ENCODE measurements at regions of chr10 and their contacts with region 1.

Region 1: GRCh38 chr10:112811740-112812551 is 138.1 kb upstream of the TCF7L2 start:
- DNase-seq: peak; percentile 80
- H3K4me3 ChIP-seq: peak overlapping the region; percentile 54
- H3K27ac ChIP-seq: peak overlapping the region; percentile 81
- H3K27me3 ChIP-seq: no peaks in the 10 kb centered on the region
- CTCF ChIP-seq: no peak

Region 2: DNA sequence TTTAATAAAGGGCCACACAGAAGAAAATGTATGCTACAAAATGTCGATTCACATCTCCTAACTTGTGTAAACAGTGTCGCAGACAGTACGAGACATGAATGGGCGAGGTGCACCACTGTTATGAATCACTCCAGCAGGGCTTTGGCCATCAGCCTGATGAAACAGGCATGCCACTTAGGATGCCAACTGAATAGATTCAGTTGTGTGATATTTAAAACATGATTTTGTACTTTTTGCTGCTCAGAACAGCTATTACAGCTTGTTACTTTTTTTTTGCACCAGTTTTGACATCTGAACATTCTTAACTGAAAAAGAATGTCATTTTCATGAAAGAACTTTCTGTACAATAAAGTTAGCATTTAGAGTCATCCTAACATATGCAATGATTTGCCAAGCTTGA is 226.8 kb before region 1 on chr10:
- CTCF ChIA-PET with region 1: no interaction called
- POLR2A ChIA-PET with region 1: no interaction called
- DNase-seq: no peak
- H3K4me3 ChIP-seq: no peak overlapping the region
- H3K27ac ChIP-seq: no peak overlapping the region
- H3K27me3 ChIP-seq: no peaks in the 10 kb centered on the region
- CTCF ChIP-seq: no peak

Region 3: DNA sequence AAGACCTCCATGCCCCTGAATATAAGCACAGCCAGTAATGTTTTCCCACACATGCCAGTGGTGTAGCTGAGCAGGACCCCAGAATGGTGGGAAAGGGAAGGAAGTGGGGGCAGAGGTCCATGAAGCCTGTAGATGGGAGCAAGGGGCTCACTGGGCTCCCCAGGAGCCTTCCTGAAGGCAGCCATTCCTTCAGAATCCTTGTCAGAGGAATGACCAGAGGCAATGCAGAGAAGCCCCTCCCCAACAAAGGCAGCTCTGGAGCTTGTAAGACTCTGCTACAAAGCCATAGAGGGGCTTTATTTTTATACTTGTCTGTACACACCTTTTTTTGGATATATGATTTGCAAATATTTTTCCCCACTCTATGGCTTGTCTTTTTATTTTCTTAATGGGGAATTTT is 26.9 kb before region 1 on chr10:
- CTCF ChIA-PET with region 1: no interaction called
- POLR2A ChIA-PET with region 1: no interaction called
- DNase-seq: no peak
- H3K4me3 ChIP-seq: no peak overlapping the region
- H3K27ac ChIP-seq: no peak overlapping the region
- H3K27me3 ChIP-seq: no peaks in the 10 kb centered on the region
- CTCF ChIP-seq: no peak

Region 4: GRCh38 chr10:112949875-112950507 is 138.0 kb after region 1 on chr10 and contains the start of gene TCF7L2:
- CTCF ChIA-PET with region 1: no interaction called
- POLR2A ChIA-PET with region 1: interaction called, 11 read pairs
- DNase-seq: peak; percentile 89
- H3K4me3 ChIP-seq: peak within 1 kb of the TSS; percentile 60
- H3K27ac ChIP-seq: peak within 1 kb of the TSS; percentile 77
- H3K27me3 ChIP-seq: no peaks in the 10 kb centered on the region
- CTCF ChIP-seq: no peak
- polyA plus RNA-seq, gene TCF7L2: 6.3 and 7.7 TPM in 2 replicates

Region 5: DNA sequence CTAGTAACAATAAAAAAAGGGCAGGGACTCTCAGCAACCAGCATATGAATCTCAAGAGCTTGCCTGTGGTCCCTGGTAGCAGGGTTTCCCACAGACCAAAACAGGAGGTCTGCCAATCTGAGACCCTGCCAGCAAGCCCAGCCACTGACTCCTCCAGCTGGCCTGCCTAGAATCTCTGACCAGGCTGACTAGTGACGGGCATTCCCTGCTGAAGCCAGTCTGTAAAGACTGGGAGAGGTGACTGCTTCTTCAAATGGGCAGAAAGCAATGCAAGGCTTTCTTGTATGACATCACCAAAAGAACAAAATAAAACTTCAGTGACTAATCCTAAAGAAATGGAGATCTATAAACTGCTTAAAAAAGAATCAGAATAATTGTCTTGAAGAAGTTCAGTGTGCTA is 387.5 kb after region 1 on chr10:
- CTCF ChIA-PET with region 1: no interaction called
- POLR2A ChIA-PET with region 1: interaction called, 11 read pairs
- DNase-seq: peak; percentile 11
- H3K4me3 ChIP-seq: no peak overlapping the region
- H3K27ac ChIP-seq: no peak overlapping the region
- H3K27me3 ChIP-seq: no peaks in the 10 kb centered on the region
- CTCF ChIP-seq: no peak